Mucosa of descending colon (tissue), 3 donors: ENCODE measurements at regions of chr16 and their contacts with region 1.

Region 1: DNA sequence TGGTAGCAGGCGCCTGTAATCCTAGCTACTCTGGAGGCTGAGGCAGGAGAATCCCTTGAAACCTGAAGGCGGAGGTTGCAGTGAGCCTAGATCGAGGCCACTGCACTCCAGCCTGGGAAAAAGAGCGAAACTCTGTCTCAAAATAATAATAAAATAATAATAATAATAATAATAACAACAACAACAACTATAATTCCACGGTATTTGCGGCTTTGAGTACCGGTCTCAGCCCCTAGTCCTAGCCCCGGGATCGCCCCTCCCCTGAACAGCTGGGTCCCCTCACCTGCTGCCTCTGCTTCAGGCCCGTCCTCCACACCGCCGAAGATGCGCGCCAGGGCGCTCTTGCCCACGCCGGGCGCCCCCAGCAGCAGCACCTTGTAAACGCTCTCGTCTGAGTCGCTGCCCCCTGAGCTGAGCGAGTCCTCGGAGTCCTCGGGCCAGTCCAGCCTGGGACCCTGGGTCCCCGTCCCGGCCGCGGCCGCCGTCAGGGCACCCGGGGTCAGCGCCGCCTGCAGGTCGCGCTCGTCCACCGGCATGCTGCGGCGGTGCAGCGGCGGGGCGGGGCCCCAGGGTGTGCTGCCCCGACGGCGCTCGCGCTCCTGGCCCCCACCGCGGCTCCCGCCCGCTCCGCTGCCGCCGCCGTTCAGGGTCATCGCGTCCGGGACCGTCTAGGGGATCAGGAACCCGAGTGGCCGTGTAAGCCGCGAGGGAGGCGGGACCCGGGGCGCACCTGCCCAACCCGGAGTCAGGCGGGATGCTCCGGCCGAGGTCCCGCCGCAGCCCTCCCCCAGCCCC is 611 bp downstream of the RRAD start:
- DNase-seq: peak; percentile 65 to 71 (median 69)
- ATAC-seq: peak; percentile 80
- H3K4me3 ChIP-seq: no peak overlapping the region
- H3K4me1 ChIP-seq: peaks cover 8% of the 10 kb centered on the region
- CTCF ChIP-seq: peak; percentile 39

Region 2: GRCh38 chr16:66894948-66895688 is 29.6 kb before region 1 on chr16:
- intact Hi-C with region 1: loop called in 1 of 2 experiments (anchors 5 kb)
- DNase-seq: peak in 2 of 3 donors; percentile 75 to 90
- ATAC-seq: peak; percentile 87
- H3K4me3 ChIP-seq: no peak overlapping the region
- H3K4me1 ChIP-seq: peaks cover 25% of the 10 kb centered on the region
- CTCF ChIP-seq: peak; percentile 61

Region 3: GRCh38 chr16:67317853-67318252 is 393.1 kb after region 1 on chr16:
- intact Hi-C with region 1: no loop called
- DNase-seq: no peak
- ATAC-seq: no peak
- H3K4me3 ChIP-seq: no peak overlapping the region
- H3K4me1 ChIP-seq: no peaks in the 10 kb centered on the region
- CTCF ChIP-seq: no peak